Body of pancreas (tissue), 4 donors: ENCODE measurements at regions of chr20 and their contacts with region 1.

Region 1: DNA sequence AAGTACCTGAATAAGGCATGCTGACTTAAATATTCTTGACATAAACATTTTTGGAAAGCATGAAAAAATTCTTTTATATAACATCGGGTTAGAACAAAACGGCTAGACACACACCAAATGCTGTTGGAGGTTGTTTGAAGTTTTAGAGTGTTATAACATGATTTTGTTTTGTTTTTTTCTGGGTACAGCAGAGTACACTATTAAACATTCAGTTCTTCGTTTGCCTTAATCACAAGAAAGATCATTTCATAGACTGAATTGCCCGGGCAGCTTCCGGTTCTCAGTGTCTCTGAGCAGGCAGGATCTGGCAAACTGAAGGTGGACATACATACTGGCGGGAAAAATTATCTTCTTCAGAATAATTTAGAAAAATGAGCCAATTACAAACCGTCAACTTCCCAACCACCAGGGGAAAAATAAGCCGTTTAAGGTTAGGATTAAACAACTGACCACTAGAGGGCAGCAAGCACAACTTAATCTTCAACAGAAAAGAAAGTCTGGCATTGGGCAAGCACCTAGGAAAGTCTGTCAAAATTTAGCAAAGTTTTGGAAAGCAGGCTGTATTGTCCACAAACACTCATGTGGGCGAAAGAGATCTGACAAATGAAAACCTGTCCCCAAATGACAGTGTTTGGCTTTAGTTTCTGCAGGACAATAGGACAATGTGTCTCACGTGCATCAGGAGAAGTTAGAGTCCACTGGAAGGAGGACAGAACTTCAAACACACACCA is 15.0 kb downstream of the ZNF217 start:
- DNase-seq: peak; percentile 60 to 86 (median 70)
- ATAC-seq: peak; percentile 86
- H3K4me3 ChIP-seq: no peak overlapping the region
- H3K27ac ChIP-seq: peak overlapping the region in 3 of 4 donors; percentile 65 to 76 (median 75)
- H3K4me1 ChIP-seq: peaks cover 49% of the 10 kb centered on the region
- H3K27me3 ChIP-seq: no peaks in the 10 kb centered on the region
- CTCF ChIP-seq: peak; percentile 65 to 99 (median 99)
- POLR2A ChIP-seq: no peak

Region 2: DNA sequence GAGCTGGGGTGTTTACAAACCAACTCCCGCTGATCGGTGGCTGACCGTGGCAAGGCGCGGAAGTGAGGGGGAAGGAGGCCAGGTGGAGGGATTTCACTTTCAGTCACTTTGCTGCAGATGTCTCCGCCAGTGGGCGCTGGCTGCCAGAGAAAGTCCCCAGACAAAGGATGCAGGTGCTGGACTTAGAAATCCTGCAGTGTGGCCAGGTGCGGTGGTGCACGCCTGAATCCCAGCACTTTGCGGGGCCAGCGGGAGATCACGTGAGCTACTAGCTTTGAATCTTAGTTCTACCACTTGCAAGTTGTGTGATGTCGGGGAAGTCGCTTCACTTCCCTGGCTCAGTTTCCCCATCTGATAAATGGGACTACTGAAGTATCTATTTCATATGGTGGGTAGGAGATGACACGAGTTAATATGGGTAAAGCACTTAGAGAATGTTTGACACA is 165.4 kb before region 1 on chr20:
- intact Hi-C with region 1: no loop called
- DNase-seq: peak; percentile 47 to 71 (median 49)
- ATAC-seq: no peak
- H3K4me3 ChIP-seq: no peak overlapping the region
- H3K27ac ChIP-seq: no peak overlapping the region
- H3K4me1 ChIP-seq: no peaks in the 10 kb centered on the region
- H3K27me3 ChIP-seq: no peaks in the 10 kb centered on the region
- CTCF ChIP-seq: peak in 6 of 7 experiments; percentile 11 to 64 (median 54)
- POLR2A ChIP-seq: no peak

Region 3: GRCh38 chr20:53530440-53530839 is 48.2 kb before region 1 on chr20:
- intact Hi-C with region 1: no loop called
- DNase-seq: no peak
- ATAC-seq: no peak
- H3K4me3 ChIP-seq: no peak overlapping the region
- H3K27ac ChIP-seq: no peak overlapping the region
- H3K4me1 ChIP-seq: no peaks in the 10 kb centered on the region
- H3K27me3 ChIP-seq: no peaks in the 10 kb centered on the region
- CTCF ChIP-seq: no peak
- POLR2A ChIP-seq: no peak

Region 4: GRCh38 chr20:53635221-53635924 is 56.7 kb after region 1 on chr20:
- intact Hi-C with region 1: no loop called
- DNase-seq: no peak
- ATAC-seq: no peak
- H3K4me3 ChIP-seq: no peak overlapping the region
- H3K27ac ChIP-seq: no peak overlapping the region
- H3K4me1 ChIP-seq: no peaks in the 10 kb centered on the region
- H3K27me3 ChIP-seq: no peaks in the 10 kb centered on the region
- CTCF ChIP-seq: no peak
- POLR2A ChIP-seq: no peak

Region 5: GRCh38 chr20:53915446-53916172 is 337.0 kb after region 1 on chr20:
- intact Hi-C with region 1: loop called (anchors 5 kb)
- DNase-seq: peak; percentile 93 to 97 (median 94)
- ATAC-seq: peak; percentile 85
- H3K4me3 ChIP-seq: peak overlapping the region; percentile 24 to 53
- H3K27ac ChIP-seq: peak overlapping the region; percentile 52 to 87 (median 76)
- H3K4me1 ChIP-seq: peaks cover 29% of the 10 kb centered on the region
- H3K27me3 ChIP-seq: no peaks in the 10 kb centered on the region
- CTCF ChIP-seq: peak; percentile 66 to 98 (median 88)
- POLR2A ChIP-seq: no peak

Region 6: GRCh38 chr20:54062812-54063280 is 484.2 kb after region 1 on chr20:
- intact Hi-C with region 1: loop called (anchors 10 kb)
- DNase-seq: no peak
- ATAC-seq: no peak
- H3K4me3 ChIP-seq: no peak overlapping the region
- H3K27ac ChIP-seq: no peak overlapping the region
- H3K4me1 ChIP-seq: peaks cover 9% of the 10 kb centered on the region
- H3K27me3 ChIP-seq: no peaks in the 10 kb centered on the region
- CTCF ChIP-seq: peak; percentile 21 to 64 (median 46)
- POLR2A ChIP-seq: no peak

Region 7: GRCh38 chr20:54173653-54174456 is 595.2 kb after region 1 on chr20 and contains the start of gene CYP24A1:
- intact Hi-C with region 1: no loop called
- DNase-seq: no peak
- ATAC-seq: no peak
- H3K4me3 ChIP-seq: no peak within 1 kb of the TSS
- H3K27ac ChIP-seq: no peak within 1 kb of the TSS
- H3K4me1 ChIP-seq: peaks cover 18% of the 10 kb centered on the region
- H3K27me3 ChIP-seq: peaks cover 0 to 31% of the 10 kb centered on the region in 2 donors
- CTCF ChIP-seq: no peak
- POLR2A ChIP-seq: no peak
- total RNA-seq, gene CYP24A1: not detected